ENCODE measurements at regions of chr15 and their contacts with region 1.

Region 1: DNA sequence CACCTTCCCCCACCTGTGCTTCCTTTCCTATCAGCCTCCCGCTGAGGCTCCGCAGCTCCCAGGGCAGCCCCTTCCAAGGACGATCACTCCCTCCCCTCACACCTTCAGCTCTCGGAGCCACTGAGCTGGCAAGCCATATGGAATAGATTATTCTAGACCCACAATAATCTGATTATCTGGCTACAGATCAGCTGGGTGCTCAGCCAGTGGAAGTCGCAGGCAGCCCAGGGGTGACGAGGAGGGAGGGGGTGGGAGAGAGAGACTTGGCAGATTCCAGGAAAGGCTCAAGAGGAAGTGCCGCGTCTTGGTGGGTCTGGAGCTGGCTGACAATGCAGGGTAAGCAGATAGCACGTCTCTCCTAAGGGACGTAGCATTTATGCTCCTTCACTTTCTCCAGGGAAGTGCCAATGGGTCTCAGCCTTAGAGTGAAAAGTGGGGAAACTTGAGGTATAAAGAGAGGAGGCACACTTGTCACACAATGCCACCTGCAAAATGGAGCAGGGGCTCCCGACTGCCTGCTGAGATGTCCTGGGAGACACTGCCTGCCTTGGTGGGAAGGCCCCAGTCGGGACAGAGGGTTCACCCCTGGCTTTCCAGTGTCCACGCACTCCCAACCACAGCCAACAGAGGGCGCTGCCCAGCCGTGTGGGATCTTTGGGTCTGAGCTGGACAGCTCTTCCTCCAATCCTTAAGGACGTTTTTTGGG is 9.4 kb upstream of the MESP1 start:
- DNase-seq: peak; percentile 85
- H3K4me3 Mint-ChIP-seq: no peak overlapping the region
- H3K27ac Mint-ChIP-seq: no peak overlapping the region
- H3K4me1 Mint-ChIP-seq: no peaks in the 10 kb centered on the region
- H3K27me3 Mint-ChIP-seq: no peaks in the 10 kb centered on the region

Region 2: DNA sequence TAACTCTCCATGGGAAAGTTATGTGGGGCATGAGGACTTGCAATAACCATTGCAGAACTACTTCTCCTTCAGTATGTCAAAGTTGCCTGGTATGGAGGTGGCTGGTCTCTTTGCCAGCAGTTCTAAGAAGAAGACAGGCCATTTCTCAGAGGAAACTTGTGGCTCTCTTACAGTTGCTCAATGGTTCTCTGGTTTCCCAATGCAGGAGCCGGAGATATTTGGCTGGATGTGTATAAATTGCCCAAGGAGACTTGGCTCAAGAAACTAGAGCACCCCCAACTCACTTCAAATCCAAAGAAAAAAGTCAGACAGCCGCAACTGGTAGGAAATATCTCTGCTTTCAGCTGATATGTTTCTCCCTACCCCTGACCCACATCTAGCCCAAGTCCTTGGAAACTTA is 45.7 kb before region 1 on chr15:
- CTCF ChIA-PET with region 1: no interaction called
- intact Hi-C with region 1: no loop called
- DNase-seq: no peak
- H3K4me3 Mint-ChIP-seq: no peak overlapping the region
- H3K27ac Mint-ChIP-seq: no peak overlapping the region
- H3K4me1 Mint-ChIP-seq: no peaks in the 10 kb centered on the region
- H3K27me3 Mint-ChIP-seq: peaks cover 6% of the 10 kb centered on the region

Region 3: DNA sequence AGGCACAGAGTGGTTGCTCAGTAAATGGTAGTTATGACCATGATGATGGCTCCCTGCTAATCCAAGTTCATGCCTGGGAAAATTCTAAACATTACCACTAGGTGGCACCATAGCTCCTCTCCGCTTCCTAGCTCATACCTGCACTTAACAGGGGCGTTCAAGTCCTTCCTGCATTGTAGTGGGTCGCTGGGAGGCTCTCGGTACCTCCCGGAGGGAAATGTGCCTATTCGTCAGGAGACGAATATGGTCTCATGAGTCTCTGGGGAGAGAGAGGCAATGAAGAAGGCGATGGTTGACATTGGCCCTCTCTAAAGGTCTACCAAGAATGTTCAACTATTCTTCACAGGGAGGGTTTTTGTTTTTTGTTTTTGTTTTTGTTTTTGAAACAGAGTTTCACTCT is 20.3 kb before region 1 on chr15:
- CTCF ChIA-PET with region 1: interaction called, 14 read pairs
- intact Hi-C with region 1: no loop called
- DNase-seq: peak; percentile 71
- H3K4me3 Mint-ChIP-seq: no peak overlapping the region
- H3K27ac Mint-ChIP-seq: no peak overlapping the region
- H3K4me1 Mint-ChIP-seq: peaks cover 1% of the 10 kb centered on the region
- H3K27me3 Mint-ChIP-seq: peaks cover 11% of the 10 kb centered on the region

Region 4: GRCh38 chr15:89874926-89875564 is 114.6 kb after region 1 on chr15:
- CTCF ChIA-PET with region 1: interaction called, 55 read pairs
- intact Hi-C with region 1: loop called (anchors 1 kb)
- DNase-seq: peak; percentile 90
- H3K4me3 Mint-ChIP-seq: no peak overlapping the region
- H3K27ac Mint-ChIP-seq: no peak overlapping the region
- H3K4me1 Mint-ChIP-seq: peaks cover 3% of the 10 kb centered on the region
- H3K27me3 Mint-ChIP-seq: no peaks in the 10 kb centered on the region

Region 5: DNA sequence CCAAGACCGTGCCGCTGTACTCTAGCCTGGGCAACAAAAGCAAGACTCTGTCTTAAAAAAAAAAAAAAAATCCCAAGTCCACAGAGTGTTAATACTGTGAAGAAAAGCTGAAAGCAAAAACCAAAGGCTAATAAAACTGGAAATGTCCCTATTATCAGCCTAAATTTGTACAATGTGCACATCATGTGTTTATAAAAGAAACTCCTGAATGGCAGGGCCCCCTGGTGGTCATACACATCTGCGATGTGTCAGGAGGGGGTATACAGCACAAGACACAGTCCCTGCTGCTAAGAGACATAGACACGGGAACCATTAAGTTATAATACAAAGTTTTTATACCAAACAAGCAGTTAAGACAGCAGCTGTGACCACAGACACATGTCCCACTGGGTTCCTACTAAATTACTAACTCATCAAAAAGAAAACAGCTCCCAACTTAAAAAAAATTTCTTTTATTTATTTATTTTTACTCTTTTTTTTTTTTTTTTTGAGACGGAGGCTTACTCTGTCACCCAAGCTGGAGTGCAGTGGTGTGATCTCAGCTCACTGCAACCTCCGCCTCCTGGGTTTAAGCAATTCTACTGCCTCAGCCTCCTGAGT is 310.9 kb after region 1 on chr15:
- CTCF ChIA-PET with region 1: interaction called, 7 read pairs
- intact Hi-C with region 1: loop called (anchors 1 kb)
- DNase-seq: peak; percentile 92
- H3K4me3 Mint-ChIP-seq: no peak overlapping the region
- H3K27ac Mint-ChIP-seq: no peak overlapping the region
- H3K4me1 Mint-ChIP-seq: peaks cover 12% of the 10 kb centered on the region
- H3K27me3 Mint-ChIP-seq: no peaks in the 10 kb centered on the region

Region 6: GRCh38 chr15:90286678-90287077 is 526.2 kb after region 1 on chr15:
- CTCF ChIA-PET with region 1: no interaction called
- intact Hi-C with region 1: loop called (anchors 10 kb)
- DNase-seq: peak; percentile 62
- H3K4me3 Mint-ChIP-seq: no peak overlapping the region
- H3K27ac Mint-ChIP-seq: no peak overlapping the region
- H3K4me1 Mint-ChIP-seq: no peaks in the 10 kb centered on the region
- H3K27me3 Mint-ChIP-seq: no peaks in the 10 kb centered on the region